OCI-LY7 (cell line): ENCODE measurements at regions of chr2 and their contacts with region 1.

Region 1: GRCh38 chr2:38602732-38603401 is at the start of gene HNRNPLL:
- DNase-seq: peak; percentile 94
- H3K4me3 ChIP-seq: peak within 1 kb of the TSS; percentile 81
- H3K27ac ChIP-seq: peak within 1 kb of the TSS; percentile 41
- H3K4me1 ChIP-seq: peaks cover 57% of the 10 kb centered on the region
- CTCF ChIP-seq: no peak
- total RNA-seq, gene HNRNPLL: 7.2 and 7.6 TPM in 2 replicates

Region 2: DNA sequence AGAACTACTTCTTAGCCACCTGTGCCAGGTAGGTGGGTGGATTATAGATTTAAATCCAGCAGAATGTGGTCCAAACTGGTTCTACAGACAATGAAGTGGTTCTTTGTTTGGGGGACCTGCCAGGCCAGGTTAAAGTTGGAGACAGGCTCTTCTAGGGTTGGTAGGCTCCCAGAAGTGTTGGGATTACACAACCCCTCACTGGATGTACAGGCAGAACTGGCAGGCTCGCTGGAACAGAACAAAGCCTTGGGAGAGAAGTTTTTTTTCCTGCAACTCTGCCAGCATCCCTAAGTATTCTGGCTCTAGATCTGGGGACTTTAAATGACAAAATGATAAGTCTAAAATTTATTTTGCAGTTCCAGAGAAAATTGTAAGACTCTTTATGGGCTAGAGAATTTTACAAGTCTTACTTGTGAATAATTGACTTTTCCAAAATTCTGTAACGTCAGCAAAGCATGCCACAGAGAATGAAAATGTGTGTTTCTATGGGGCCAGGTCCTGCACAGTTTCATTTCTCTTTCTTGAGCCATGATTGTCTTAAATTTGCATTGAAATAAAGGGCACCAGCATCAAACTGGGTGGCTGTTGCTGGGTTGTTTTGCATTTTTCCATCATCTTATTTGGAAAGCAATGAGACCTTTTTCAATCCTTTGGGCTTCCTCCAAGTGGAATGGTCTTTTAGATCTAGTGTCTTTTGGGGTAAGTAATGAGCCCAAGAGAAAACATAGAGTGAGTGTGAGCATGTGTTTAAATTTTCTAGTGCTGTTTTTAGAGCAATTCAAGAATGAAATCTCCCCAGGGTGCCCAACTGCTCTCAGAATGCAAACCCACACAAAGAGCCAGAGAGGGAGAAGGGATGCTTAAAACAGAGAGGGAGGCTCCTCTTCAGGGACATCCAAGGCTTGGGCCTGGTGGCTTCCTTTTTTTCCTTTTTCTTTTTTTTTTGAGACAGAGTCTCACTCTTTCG is 193.4 kb before region 1 on chr2:
- CTCF ChIA-PET with region 1: no interaction called
- POLR2A ChIA-PET with region 1: interaction called, 3 read pairs
- intact Hi-C with region 1: loop called (anchors 5 kb)
- DNase-seq: peak; percentile 87
- H3K4me3 ChIP-seq: peak overlapping the region; percentile 63
- H3K27ac ChIP-seq: peak overlapping the region; percentile 100
- H3K4me1 ChIP-seq: peaks cover 57% of the 10 kb centered on the region
- CTCF ChIP-seq: no peak

Region 3: DNA sequence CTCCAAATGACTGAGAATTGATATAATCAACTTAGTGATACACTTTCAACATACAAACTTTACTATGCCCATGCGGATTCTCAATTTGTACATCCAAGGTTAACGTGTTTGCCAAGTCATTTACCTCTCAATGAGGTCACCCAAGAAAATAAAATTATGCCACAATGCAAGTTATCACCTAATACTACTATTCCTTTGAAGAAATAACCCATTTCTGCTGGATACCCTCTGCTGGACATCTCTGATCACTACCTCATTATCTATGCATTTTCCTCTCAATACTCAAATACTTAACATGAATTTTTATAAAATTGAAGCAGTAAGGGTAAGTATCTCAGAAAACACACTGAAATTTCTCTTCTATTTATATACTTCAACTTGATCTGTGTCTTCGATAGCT is 12.8 kb before region 1 on chr2:
- CTCF ChIA-PET with region 1: no interaction called
- POLR2A ChIA-PET with region 1: interaction called, 10 read pairs
- intact Hi-C with region 1: no loop called
- DNase-seq: no peak
- H3K4me3 ChIP-seq: no peak overlapping the region
- H3K27ac ChIP-seq: no peak overlapping the region
- H3K4me1 ChIP-seq: peaks cover 19% of the 10 kb centered on the region
- CTCF ChIP-seq: peak; percentile 56

Region 4: GRCh38 chr2:38648107-38648761 is 45.4 kb after region 1 on chr2:
- CTCF ChIA-PET with region 1: no interaction called
- POLR2A ChIA-PET with region 1: interaction called, 4 read pairs
- intact Hi-C with region 1: loop called (anchors 5 kb)
- DNase-seq: peak; percentile 58
- H3K4me3 ChIP-seq: peak overlapping the region; percentile 3
- H3K27ac ChIP-seq: peak overlapping the region; percentile 33
- H3K4me1 ChIP-seq: peaks cover 38% of the 10 kb centered on the region
- CTCF ChIP-seq: no peak

Region 5: DNA sequence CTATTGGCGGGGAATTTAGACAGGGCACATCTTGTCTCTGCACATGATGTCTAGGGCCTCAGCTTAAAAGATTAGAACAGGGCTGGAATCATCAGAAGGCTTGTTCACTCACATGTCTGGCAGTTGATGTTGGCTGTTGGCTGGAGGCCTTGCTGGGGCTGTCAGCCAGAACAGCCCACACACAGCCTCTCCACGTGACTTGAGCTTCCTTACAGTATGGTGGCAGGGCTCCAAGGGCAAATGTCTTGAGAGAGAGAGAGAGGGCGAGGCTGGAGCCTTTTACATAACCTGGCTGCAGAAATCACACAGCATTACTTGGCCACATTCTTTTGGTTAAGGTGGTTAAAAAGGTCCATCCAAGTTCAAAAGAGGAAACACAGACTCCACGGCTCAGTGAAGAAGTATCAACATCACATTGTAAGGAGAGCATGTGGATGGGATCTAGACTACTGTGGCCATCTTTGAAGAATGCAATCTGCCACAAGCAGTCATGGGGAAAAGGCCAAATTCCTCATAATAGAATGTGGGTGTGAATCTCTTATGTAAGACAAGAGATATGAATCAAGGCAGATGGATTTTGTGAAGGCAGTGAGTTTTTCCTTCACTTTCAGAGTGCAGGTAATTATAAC is 117.9 kb after region 1 on chr2:
- CTCF ChIA-PET with region 1: interaction called, 4 read pairs
- POLR2A ChIA-PET with region 1: interaction called, 4 read pairs
- intact Hi-C with region 1: loop called (anchors 1 kb)
- DNase-seq: no peak
- H3K4me3 ChIP-seq: no peak overlapping the region
- H3K27ac ChIP-seq: no peak overlapping the region
- H3K4me1 ChIP-seq: peaks cover 20% of the 10 kb centered on the region
- CTCF ChIP-seq: no peak

Region 6: GRCh38 chr2:39124000-39124745 is 521.3 kb after region 1 on chr2:
- CTCF ChIA-PET with region 1: no interaction called
- POLR2A ChIA-PET with region 1: interaction called, 3 read pairs
- intact Hi-C with region 1: loop called (anchors 5 kb)
- DNase-seq: peak; percentile 99
- H3K4me3 ChIP-seq: peak overlapping the region; percentile 73
- H3K27ac ChIP-seq: peak overlapping the region; percentile 87
- H3K4me1 ChIP-seq: peaks cover 61% of the 10 kb centered on the region
- CTCF ChIP-seq: peak; percentile 78

Region 7: GRCh38 chr2:39289609-39290008 is 686.7 kb after region 1 on chr2:
- CTCF ChIA-PET with region 1: no interaction called
- POLR2A ChIA-PET with region 1: no interaction called
- intact Hi-C with region 1: no loop called
- DNase-seq: no peak
- H3K4me3 ChIP-seq: no peak overlapping the region
- H3K27ac ChIP-seq: no peak overlapping the region
- H3K4me1 ChIP-seq: no peaks in the 10 kb centered on the region
- CTCF ChIP-seq: no peak